ENCODE measurements at regions of chr2 and their contacts with region 1.

Region 1: DNA sequence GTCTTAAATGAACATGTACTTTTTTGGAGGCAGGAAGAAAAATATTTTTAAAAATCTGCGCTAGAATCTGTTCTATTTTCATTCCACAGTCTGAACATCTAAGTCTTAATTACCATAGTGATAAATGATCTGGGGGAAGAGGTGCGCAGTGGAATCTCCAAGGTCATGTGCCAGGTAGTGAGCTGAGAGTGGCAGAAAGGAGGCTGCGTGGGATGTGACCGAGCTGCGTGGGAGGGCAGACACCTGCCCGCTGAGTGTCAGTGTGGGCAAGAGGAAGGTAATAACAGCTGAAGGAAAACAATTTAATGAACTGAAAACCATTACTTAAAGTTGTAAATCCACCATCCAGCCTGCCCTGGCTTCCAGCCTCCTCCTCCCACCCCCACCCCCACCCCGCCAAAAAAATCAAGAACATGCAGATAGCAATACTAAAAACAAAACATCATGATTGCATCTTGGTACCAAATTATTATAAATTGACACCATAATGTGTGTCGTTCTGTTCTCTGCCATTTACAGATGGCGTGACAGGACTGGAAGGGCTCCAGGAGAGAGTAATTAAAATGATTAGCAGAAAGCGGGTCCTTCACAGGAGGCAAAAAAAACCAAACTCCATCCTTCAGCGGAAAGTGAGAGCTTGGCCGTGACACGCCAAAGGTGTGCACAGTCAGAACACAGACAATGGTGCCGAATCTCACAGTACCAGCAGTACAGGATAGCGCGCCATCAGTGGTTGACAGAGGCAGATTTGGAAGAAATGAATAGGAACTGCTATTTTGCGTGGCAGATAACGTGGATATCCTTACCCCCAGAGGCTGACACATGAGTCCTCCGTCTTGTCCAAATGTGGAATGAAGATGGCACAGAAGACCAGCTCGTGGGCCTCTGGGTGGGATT is 11.4 kb upstream of the DTNB start:
- DNase-seq: no peak
- H3K4me3 ChIP-seq: no peak overlapping the region
- H3K27ac ChIP-seq: no peak overlapping the region
- H3K4me1 ChIP-seq: no peaks in the 10 kb centered on the region
- H3K27me3 ChIP-seq: no peaks in the 10 kb centered on the region
- CTCF ChIP-seq: no peak
- EP300 ChIP-seq: no peak
- POLR2A ChIP-seq: no peak
- RAD21 ChIP-seq: no peak

Region 2: GRCh38 chr2:25673300-25674076 is 11.3 kb before region 1 on chr2 and contains the start of gene DTNB:
- CTCF ChIA-PET with region 1: interaction called, 4 read pairs
- POLR2A ChIA-PET with region 1: interaction called, 11 read pairs
- DNase-seq: peak in 1 of 2 experiments; percentile 91
- H3K4me3 ChIP-seq: peak within 1 kb of the TSS; percentile 62 to 92 (median 76)
- H3K27ac ChIP-seq: peak within 1 kb of the TSS; percentile 84
- H3K4me1 ChIP-seq: peaks cover 11 to 22% (median 15%) of the 10 kb centered on the region in 4 experiments; a peak in 6 of 7 replicates
- H3K27me3 ChIP-seq: peaks cover 0 to 17% (median 9%) of the 10 kb centered on the region in 4 experiments; a peak in 5 of 7 replicates
- CTCF ChIP-seq: no peak
- EP300 ChIP-seq: no peak
- POLR2A ChIP-seq: peak in 1 of 2 experiments; percentile 10; a peak in 1 of 3 replicates
- RAD21 ChIP-seq: no peak
- total RNA-seq, gene DTNB: 40.5 and 49.5 TPM in 2 replicates

Region 3: DNA sequence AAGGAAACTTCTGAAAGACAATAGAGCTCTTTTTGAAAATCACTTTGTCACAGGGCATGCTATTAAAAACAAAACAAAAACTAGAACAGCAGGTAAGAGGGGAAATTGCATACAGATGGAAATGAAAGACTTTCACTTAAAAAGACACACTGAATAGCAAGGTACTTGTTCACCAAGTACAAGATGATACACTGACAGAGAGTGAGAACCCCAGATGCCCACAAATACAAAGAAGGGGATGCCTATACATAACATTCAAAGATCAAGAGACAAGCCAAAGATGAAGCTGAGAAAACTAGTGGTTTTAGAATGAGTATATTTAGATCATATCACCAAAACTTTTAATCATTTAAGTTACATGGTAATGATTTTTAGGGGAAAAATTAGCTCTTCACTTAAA is 132.8 kb after region 1 on chr2:
- CTCF ChIA-PET with region 1: no interaction called
- POLR2A ChIA-PET with region 1: no interaction called
- DNase-seq: no peak
- H3K4me3 ChIP-seq: no peak overlapping the region
- H3K27ac ChIP-seq: no peak overlapping the region
- H3K4me1 ChIP-seq: peaks cover 0 to 7% (median 2%) of the 10 kb centered on the region in 4 experiments; a peak in 4 of 7 replicates
- H3K27me3 ChIP-seq: no peaks in the 10 kb centered on the region
- CTCF ChIP-seq: no peak
- EP300 ChIP-seq: no peak
- POLR2A ChIP-seq: no peak
- RAD21 ChIP-seq: no peak

Measured in H1 (cell line).